CD8-positive, alpha-beta T cell (primary cell): ENCODE measurements at regions of chr17 and their contacts with region 1.

Region 1: DNA sequence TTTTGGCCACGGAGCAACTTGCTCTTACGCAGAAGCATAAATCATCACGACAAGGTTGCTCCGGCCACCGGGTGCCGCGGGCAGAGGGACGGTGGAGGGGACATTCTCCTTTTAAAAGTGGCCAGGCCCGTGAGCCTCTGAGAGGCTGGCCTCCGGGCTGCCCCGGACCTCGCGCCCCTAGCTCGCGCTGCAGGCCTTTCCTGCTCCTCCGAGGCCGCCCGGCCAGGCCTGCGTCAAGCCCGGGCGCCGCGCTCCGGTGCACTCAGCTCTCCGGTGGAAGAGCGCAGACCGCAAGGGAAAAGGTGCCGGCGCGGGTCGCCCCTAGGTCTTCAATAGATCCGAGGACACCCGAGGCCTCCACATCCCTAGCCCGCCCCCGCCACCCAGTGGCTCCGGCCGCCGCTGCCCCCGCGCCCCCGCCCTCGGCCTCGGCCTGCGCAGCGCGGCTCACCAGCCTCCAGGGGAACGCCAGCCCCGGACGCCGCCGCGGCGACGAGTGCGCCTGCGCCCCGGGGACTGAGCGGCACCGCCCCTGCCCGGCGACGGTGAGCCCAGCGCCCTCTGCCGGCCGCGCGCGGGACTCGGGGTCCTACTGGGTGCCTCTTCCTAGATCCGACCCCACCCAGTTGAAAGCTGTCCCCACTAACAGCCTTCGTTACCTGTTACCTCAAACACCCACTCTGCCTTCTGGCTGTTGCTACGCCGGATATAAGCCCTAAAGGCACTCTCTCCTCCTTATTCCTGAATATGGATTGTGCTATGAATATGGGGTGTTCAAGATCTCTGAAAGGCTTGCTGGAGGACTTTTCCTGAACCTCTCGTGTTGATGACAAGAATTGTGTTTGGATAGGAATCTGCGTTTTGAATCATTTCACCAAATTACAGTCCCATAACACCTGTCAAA is at the start of gene LYRM9:
- DNase-seq: peak; percentile 84 to 97 (median 93)
- ATAC-seq: peak; percentile 99
- H3K4me3 ChIP-seq: peak within 1 kb of the TSS; percentile 64 to 85
- H3K4me3 Mint-ChIP-seq: peak within 1 kb of the TSS; percentile 84
- H3K27ac ChIP-seq: peak within 1 kb of the TSS; percentile 50 to 56
- H3K27ac Mint-ChIP-seq: peak within 1 kb of the TSS; percentile 69
- H3K4me1 ChIP-seq: peaks cover 7% of the 10 kb centered on the region
- H3K4me1 Mint-ChIP-seq: peaks cover 19% of the 10 kb centered on the region
- H3K27me3 ChIP-seq: no peaks in the 10 kb centered on the region
- H3K27me3 Mint-ChIP-seq: peaks cover 15% of the 10 kb centered on the region
- CTCF ChIP-seq: peak; percentile 90
- total RNA-seq, gene LYRM9: 12.5 to 12.8 TPM

Region 2: DNA sequence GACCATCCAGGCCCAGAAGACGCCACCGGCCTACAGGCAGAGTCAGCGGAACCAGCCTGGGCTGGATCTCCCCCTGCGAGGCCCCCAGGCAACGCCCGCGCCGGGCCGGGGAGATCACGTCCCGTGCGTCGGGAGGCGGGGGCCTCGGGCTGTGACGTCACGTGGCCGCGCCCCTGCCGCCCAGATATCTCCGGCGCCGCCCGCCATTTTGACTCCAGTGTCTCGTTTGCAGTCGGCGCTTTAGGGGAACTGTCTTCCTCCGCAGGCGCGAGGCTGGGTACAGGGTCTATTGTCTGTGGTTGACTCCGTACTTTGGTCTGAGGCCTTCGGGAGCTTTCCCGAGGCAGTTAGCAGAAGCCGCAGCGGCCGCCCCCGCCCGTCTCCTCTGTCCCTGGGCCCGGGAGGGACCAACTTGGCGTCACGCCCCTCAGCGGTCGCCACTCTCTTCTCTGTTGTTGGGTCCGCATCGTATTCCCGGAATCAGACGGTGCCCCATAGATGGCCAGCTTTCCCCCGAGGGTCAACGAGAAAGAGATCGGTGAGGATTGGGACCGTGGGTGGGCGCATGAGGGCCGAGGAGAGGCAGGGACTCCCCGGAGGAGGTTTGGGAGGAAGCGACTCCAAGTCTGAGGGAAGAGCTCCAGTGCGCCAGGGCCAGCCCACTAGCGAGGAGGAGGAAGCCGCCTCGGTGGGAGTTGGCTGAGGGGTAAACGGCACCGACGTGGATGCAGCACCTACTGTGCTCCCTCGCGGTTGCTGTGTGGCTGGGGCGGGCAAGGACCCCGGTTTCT is 599.0 kb before region 1 on chr17 and contains the start of gene WSB1:
- CTCF ChIA-PET with region 1: no interaction called
- POLR2A ChIA-PET with region 1: no interaction called
- intact Hi-C with region 1: loop called in 1 of 2 experiments (anchors 5 kb)
- DNase-seq: peak; percentile 86 to 97 (median 92)
- ATAC-seq: peak; percentile 84
- H3K4me3 ChIP-seq: peak within 1 kb of the TSS; percentile 89 to 99
- H3K4me3 Mint-ChIP-seq: peak within 1 kb of the TSS; percentile 93
- H3K27ac ChIP-seq: peak within 1 kb of the TSS; percentile 98 to 99
- H3K27ac Mint-ChIP-seq: peak within 1 kb of the TSS; percentile 100
- H3K4me1 ChIP-seq: peaks cover 27% of the 10 kb centered on the region
- H3K4me1 Mint-ChIP-seq: peaks cover 36% of the 10 kb centered on the region
- H3K27me3 ChIP-seq: no peaks in the 10 kb centered on the region
- H3K27me3 Mint-ChIP-seq: no peaks in the 10 kb centered on the region
- CTCF ChIP-seq: no peak
- total RNA-seq, gene WSB1: 89.0 to 91.1 TPM

Region 3: GRCh38 chr17:27800522-27800921 is 92.6 kb before region 1 on chr17 and contains the start of gene NOS2:
- CTCF ChIA-PET with region 1: interaction called, 108 read pairs
- POLR2A ChIA-PET with region 1: interaction called, 60 read pairs
- intact Hi-C with region 1: loop called (anchors 1 kb)
- DNase-seq: no peak
- ATAC-seq: no peak
- H3K4me3 ChIP-seq: no peak within 1 kb of the TSS
- H3K4me3 Mint-ChIP-seq: no peak within 1 kb of the TSS
- H3K27ac ChIP-seq: no peak within 1 kb of the TSS
- H3K27ac Mint-ChIP-seq: no peak within 1 kb of the TSS
- H3K4me1 ChIP-seq: no peaks in the 10 kb centered on the region
- H3K4me1 Mint-ChIP-seq: peaks cover 4% of the 10 kb centered on the region
- H3K27me3 ChIP-seq: no peaks in the 10 kb centered on the region
- H3K27me3 Mint-ChIP-seq: peaks cover 27% of the 10 kb centered on the region
- CTCF ChIP-seq: no peak
- total RNA-seq, gene NOS2: 0.08 TPM in 1 of 2 experiments, not detected in the other

Region 4: DNA sequence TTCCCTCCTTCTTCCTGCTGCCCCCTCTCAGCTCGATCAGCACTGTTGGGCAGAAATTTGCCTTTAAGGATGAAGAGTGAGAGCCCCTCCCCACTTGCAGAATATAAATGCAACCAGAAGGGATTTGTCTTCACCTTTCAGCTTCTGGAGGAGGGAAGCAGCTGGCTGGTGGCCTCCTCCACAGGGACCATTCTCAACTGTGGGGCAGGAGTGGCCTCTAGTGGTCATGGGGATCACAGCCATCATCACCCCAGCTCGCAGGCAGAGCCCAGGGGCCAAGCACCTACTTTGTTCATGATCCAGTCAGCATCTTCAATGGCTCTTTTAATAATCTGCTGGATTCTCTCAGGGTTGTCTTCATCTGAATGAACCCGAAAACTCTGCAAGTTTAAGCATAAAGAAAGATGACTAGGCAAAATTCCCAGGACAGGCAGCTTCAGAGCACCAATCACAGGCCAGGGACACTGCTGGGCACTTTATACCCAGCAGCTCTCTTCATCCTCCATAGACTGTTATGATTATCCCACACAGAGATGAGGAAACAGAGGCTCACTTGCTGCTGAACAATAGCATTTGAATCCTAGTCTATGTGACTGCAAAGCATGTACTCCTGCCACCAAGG is 13.0 kb before region 1 on chr17:
- CTCF ChIA-PET with region 1: interaction called, 17 read pairs
- POLR2A ChIA-PET with region 1: interaction called, 6 read pairs
- intact Hi-C with region 1: no loop called
- DNase-seq: peak; percentile 32 to 75 (median 61)
- ATAC-seq: peak; percentile 75
- H3K4me3 ChIP-seq: no peak overlapping the region
- H3K4me3 Mint-ChIP-seq: no peak overlapping the region
- H3K27ac ChIP-seq: no peak overlapping the region
- H3K27ac Mint-ChIP-seq: no peak overlapping the region
- H3K4me1 ChIP-seq: peaks cover 17% of the 10 kb centered on the region
- H3K4me1 Mint-ChIP-seq: peaks cover 19% of the 10 kb centered on the region
- H3K27me3 ChIP-seq: no peaks in the 10 kb centered on the region
- H3K27me3 Mint-ChIP-seq: no peaks in the 10 kb centered on the region
- CTCF ChIP-seq: peak; percentile 66

Region 5: DNA sequence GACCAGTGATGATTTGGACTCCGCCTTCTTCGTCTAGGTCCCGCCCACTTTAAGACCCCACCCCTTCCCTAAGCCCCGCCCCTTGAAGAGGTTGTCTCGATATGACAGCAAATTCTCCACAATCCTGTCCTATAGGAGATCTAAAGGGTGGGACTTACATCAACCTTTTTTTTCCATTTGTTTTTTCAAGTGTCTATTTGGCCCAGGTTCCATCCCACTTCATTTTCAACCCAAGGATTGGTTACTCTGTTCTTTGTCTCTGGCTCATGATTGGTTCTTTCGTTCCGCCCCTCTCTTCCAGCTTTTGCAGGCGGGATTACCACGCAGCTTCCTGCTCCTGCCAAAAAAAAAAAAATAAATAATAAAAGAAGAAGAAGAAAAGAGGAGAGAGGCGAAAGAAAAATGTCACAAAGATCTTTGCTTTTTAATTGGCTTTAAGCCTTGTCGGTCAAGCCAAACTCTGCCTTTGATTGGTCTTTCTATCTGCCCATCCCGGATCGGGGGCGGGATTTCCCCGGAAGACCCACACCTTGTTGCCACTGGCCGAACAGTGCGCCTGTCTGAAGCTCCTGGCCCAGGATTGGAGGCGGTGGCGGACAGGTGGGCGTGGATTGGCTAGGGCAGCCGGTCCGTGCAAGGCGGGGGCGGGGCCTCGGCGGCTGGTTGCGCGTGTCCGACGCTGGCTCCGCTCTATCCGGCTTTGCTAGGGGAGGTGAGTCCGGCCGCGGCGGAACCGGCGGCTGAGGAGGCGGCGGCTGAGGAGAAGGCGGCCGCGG is 148.1 kb after region 1 on chr17:
- CTCF ChIA-PET with region 1: interaction called, 3 read pairs
- POLR2A ChIA-PET with region 1: interaction called, 3 read pairs
- intact Hi-C with region 1: loop called (anchors 1 kb)
- DNase-seq: peak; percentile 97 to 100 (median 99)
- ATAC-seq: peak; percentile 91
- H3K4me3 ChIP-seq: peak overlapping the region; percentile 62 to 76
- H3K4me3 Mint-ChIP-seq: peak overlapping the region; percentile 87
- H3K27ac ChIP-seq: peak overlapping the region; percentile 24 to 77
- H3K27ac Mint-ChIP-seq: peak overlapping the region; percentile 89
- H3K4me1 ChIP-seq: peaks cover 27% of the 10 kb centered on the region
- H3K4me1 Mint-ChIP-seq: peaks cover 53% of the 10 kb centered on the region
- H3K27me3 ChIP-seq: no peaks in the 10 kb centered on the region
- H3K27me3 Mint-ChIP-seq: no peaks in the 10 kb centered on the region
- CTCF ChIP-seq: no peak

Region 6: GRCh38 chr17:28318759-28319660 is 425.9 kb after region 1 on chr17 and contains the start of gene TMEM97:
- CTCF ChIA-PET with region 1: no interaction called
- POLR2A ChIA-PET with region 1: no interaction called
- intact Hi-C with region 1: loop called (anchors 5 to 10 kb)
- DNase-seq: peak; percentile 86 to 98 (median 93)
- ATAC-seq: peak; percentile 98
- H3K4me3 ChIP-seq: peak within 1 kb of the TSS; percentile 82
- H3K4me3 Mint-ChIP-seq: peak within 1 kb of the TSS; percentile 84
- H3K27ac ChIP-seq: peak within 1 kb of the TSS; percentile 46 to 52
- H3K27ac Mint-ChIP-seq: peak within 1 kb of the TSS; percentile 49
- H3K4me1 ChIP-seq: peaks cover 19% of the 10 kb centered on the region
- H3K4me1 Mint-ChIP-seq: peaks cover 19% of the 10 kb centered on the region
- H3K27me3 ChIP-seq: no peaks in the 10 kb centered on the region
- H3K27me3 Mint-ChIP-seq: no peaks in the 10 kb centered on the region
- CTCF ChIP-seq: no peak
- total RNA-seq, gene TMEM97: 3.7 to 4.6 TPM